Common myeloid progenitor, CD34-positive (primary cell): ENCODE measurements at regions of chr4 and their contacts with region 1.

Region 1: GRCh38 chr4:110005461-110006056 is 92.9 kb downstream of the EGF start:
- DNase-seq: peak; percentile 67 to 84 (median 81)
- H3K4me3 ChIP-seq: no peak overlapping the region
- H3K27ac ChIP-seq: no peak overlapping the region
- H3K4me1 ChIP-seq: peaks cover 0 to 3% (median under 1%) of the 10 kb centered on the region in 4 experiments
- H3K27me3 ChIP-seq: no peaks in the 10 kb centered on the region

Region 2: DNA sequence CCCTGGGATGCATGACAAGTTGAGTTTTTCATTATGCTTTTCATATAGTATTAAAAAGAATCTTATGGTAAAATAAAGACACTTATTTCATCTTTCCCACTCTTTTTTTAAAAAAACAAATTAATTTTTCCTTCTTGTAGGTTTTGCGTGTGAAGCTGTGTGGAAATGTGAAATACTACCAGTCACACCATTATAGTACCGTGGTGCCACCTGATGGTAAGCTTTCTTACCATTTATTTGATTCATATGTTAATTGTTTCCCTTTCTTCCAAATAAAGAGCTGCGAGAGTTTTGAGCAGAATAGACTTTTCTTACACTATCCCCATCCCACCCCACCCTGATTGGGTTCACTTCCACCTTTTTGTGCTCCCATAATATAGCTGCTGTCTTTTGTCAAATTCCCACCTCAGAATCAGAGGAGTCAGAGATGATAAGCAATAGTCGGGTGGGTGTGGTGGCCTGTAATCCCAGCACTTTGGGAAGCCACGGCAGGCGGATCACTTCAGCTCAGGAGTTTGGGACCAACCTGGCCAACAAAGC is 346.6 kb before region 1 on chr4:
- CTCF ChIA-PET with region 1: no interaction called
- POLR2A ChIA-PET with region 1: no interaction called
- DNase-seq: peak; percentile 29 to 60 (median 57)
- H3K4me3 ChIP-seq: no peak overlapping the region
- H3K27ac ChIP-seq: no peak overlapping the region
- H3K4me1 ChIP-seq: no peaks in the 10 kb centered on the region
- H3K27me3 ChIP-seq: no peaks in the 10 kb centered on the region

Region 3: DNA sequence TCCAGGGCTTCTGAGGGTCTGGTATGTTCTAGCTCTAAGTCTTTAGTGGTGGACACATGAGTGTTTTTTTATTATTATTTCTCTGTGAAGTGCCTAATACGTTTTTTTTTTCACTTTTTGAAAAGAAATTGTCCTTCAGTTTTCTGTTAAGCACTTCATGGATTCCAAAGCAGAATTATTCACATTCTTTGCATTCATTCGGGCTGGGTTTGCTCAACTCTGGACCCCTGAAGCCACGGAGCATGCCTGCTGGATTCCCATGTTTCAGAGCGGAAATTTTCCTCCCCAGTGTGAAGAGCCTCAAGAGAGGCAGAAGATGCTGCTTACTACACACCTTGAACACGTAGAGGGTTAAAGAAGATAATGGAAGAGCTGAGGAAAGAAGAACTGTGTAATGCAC is 14.6 kb after region 1 on chr4:
- CTCF ChIA-PET with region 1: interaction called, 21 read pairs
- POLR2A ChIA-PET with region 1: no interaction called
- DNase-seq: no peak
- H3K4me3 ChIP-seq: no peak overlapping the region
- H3K27ac ChIP-seq: no peak overlapping the region
- H3K4me1 ChIP-seq: no peaks in the 10 kb centered on the region
- H3K27me3 ChIP-seq: no peaks in the 10 kb centered on the region

Region 4: DNA sequence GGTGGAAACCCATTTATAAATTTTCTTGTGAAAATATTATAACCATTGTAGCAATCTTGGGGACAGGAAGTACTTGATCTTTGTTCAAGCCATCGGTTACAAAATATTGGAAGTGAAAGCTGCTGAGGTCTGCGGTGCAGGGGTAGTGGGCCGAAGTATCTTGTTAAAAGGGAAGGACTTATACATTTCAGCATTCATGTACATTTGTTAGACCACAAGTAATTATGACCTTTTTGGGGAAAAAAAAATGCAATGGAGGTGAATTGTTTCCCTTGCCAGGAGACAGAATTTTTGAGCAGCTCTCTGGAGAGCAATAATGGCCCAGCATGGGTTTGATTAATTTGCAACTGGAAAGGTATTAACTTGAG is 28.5 kb after region 1 on chr4:
- CTCF ChIA-PET with region 1: interaction called, 28 read pairs
- POLR2A ChIA-PET with region 1: no interaction called
- DNase-seq: peak; percentile 48 to 86 (median 84)
- H3K4me3 ChIP-seq: peak overlapping the region in 2 of 7 experiments; percentile 22 to 32
- H3K27ac ChIP-seq: no peak overlapping the region
- H3K4me1 ChIP-seq: peaks cover 11 to 51% (median 33%) of the 10 kb centered on the region in 4 experiments
- H3K27me3 ChIP-seq: no peaks in the 10 kb centered on the region